SK-N-SH (cell line): ENCODE measurements at regions of chr22 and their contacts with region 1.

Region 1: DNA sequence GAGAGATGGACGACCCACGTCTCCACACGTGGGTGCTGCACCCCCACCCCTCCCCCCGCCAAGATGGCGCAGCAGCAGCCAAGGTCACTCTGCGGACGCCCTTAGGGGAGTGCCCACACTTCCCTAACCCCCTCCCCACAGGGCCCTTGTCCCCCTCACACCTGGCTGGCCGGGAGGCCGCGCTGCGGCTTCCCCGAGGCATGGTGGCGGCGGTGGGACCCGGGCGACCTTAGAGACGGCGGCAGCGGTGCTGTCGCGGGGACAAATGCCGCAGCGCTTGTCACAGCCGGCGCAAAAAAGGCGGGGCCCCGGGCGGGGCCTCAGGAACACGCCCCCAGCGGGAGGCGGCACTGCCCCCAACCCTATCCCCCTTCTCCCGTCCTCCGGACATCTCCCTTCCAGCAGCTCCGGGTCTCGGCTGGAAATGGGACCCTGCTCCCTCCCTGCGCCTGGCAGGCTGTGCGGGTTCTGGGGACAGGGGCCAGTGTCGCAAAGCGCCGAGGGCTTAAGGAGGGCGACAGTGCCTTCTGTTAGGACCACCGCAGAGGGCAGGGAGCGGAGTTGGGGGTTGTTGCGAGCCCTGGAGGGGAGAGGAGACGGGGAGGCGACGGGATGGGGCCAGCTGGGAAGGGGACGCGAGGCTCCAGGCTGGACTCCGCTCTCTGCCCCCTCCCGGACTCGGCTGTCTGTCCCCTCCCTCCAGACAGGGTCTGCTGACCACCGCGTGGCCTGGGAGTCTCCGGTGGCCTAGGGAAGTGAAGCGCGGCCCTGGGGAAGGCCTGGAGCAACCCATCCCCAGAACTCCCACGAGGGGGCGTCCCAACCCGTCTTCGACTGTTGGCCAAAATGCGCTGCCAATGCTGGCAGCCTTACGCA is at the start of gene CHCHD10:
- DNase-seq: peak; percentile 96
- H3K4me3 ChIP-seq: peak within 1 kb of the TSS; percentile 69
- H3K27ac ChIP-seq: peak within 1 kb of the TSS; percentile 48 to 89; a peak in 3 of 4 replicates
- H3K4me1 ChIP-seq: peaks cover 9 to 16% of the 10 kb centered on the region in 2 experiments; a peak in 3 of 4 replicates
- H3K27me3 ChIP-seq: no peaks in the 10 kb centered on the region
- CTCF ChIP-seq: peak; percentile 79
- EP300 ChIP-seq: no peak
- RAD21 ChIP-seq: peak; percentile 70
- polyA plus RNA-seq, gene CHCHD10: 27.7 and 70.1 TPM in 2 replicates

Region 2: DNA sequence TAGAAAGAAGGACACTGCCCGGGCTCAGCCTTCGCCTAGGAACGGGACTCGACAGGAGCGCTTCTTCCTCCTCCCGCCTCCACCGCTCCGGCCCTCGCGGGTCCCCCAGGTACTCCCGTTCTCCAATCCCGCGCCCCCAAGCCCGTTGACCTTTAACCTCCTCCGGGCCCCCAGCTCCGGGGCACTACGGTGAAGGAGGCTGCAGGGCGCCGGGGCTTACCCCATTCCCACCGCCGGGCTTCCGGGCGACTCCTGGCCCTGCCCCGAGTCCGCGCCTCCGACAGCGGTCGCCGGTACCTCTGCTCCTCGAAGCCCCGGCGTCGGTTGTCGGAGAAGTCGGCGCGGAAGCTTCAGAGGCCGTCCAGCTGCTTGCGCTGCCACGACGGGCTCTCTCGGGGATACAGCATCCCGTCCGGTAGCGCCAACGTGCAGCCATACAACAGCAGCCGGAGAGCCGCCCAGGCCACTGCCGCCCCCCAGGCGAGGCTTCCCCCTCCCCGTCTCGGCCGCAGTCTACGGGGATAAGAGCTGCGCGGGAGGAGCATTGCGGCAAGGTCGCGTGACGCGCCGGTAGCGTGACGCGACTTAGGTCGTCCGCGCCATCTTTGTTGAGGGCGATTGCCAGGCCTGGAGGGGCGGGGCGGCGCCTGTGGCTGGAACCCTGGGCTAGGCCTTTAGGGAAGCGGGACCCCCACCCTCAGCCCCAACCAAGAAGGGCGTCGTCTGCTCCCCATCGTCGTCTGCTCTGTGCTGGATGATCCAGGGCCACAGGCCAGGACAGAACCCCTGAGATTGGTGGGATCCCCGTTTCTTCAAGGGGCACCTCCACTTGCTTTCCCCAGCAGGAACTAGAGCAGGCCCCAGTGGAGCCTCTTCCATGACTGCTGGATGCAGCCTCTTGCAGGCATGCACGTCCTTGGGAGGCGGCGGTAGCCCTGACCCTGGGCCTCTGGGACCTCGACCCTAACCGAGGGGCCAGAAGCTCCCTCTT is 50.8 kb before region 1 on chr22:
- CTCF ChIA-PET with region 1: interaction called, 11 read pairs
- POLR2A ChIA-PET with region 1: no interaction called
- DNase-seq: peak; percentile 96
- H3K4me3 ChIP-seq: peak overlapping the region; percentile 65 to 84
- H3K27ac ChIP-seq: peak overlapping the region; percentile 45 to 46; a peak in 2 of 4 replicates
- H3K4me1 ChIP-seq: peaks cover 0 to 6% of the 10 kb centered on the region in 2 experiments; a peak in 1 of 4 replicates
- H3K27me3 ChIP-seq: no peaks in the 10 kb centered on the region
- CTCF ChIP-seq: no peak
- EP300 ChIP-seq: no peak
- RAD21 ChIP-seq: no peak

Region 3: DNA sequence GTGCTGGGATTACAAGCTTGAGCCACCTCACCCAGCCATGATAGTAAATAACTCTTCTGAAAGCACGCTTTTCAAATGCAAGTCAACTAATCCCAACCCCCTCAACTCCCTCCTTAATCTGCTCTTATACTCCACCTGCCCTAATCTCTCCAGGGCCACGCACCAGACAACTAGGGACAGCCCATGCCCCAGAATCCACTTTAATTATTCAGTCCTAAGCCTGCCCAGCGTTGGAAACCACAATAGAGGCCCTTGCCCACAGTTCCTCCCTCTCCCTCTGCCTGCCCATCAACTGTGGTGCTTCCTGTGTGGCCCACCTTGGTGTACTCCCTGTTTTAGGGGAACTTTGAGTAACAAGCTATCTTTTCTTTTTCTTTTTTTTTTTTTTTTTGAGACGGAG is 11.0 kb before region 1 on chr22:
- CTCF ChIA-PET with region 1: interaction called, 24 read pairs
- POLR2A ChIA-PET with region 1: no interaction called
- DNase-seq: no peak
- H3K4me3 ChIP-seq: no peak overlapping the region
- H3K27ac ChIP-seq: no peak overlapping the region
- H3K4me1 ChIP-seq: no peaks in the 10 kb centered on the region
- H3K27me3 ChIP-seq: no peaks in the 10 kb centered on the region
- CTCF ChIP-seq: no peak
- EP300 ChIP-seq: no peak
- RAD21 ChIP-seq: no peak

Region 4: GRCh38 chr22:23786752-23787599 is 19.1 kb after region 1 on chr22 and contains the start of gene SMARCB1:
- CTCF ChIA-PET with region 1: interaction called, 20 read pairs
- POLR2A ChIA-PET with region 1: interaction called, 4 read pairs
- DNase-seq: peak; percentile 98
- H3K4me3 ChIP-seq: peak within 1 kb of the TSS; percentile 84 to 92
- H3K27ac ChIP-seq: peak within 1 kb of the TSS; percentile 97 to 98
- H3K4me1 ChIP-seq: peaks cover 0 to 43% of the 10 kb centered on the region in 2 experiments; a peak in 2 of 4 replicates
- H3K27me3 ChIP-seq: no peaks in the 10 kb centered on the region
- CTCF ChIP-seq: no peak
- EP300 ChIP-seq: no peak; a peak in 1 of 4 replicates
- RAD21 ChIP-seq: no peak
- polyA plus RNA-seq, gene SMARCB1: 182 and 215 TPM in 2 replicates

Region 5: DNA sequence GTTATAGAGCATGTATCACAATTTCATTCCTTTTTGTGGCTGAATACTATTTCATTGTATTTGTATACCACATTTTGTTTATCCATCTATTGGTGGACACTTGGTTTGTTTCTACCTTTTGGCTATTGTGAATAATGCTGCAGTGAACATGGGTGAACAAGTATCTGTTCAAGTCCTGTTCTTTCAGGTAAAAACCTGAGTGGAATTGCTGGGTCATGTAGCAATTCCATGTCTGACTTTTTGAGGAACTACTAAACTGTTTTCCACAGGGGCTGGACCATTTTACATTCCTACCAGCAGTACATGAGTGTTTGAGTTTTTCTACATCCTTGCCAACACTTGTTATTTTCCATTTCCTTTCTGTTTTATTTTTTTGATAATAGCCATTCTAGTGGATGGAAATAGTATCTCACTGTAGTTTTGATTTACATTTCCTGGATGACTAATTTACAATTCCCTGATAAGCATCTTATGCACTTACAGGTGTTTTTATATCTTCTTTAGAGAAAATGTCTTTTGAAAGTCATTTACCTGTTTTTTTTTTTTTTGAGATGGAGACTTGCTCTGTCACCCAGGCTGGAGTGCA is 255.4 kb after region 1 on chr22:
- CTCF ChIA-PET with region 1: no interaction called
- POLR2A ChIA-PET with region 1: no interaction called
- DNase-seq: no peak
- H3K4me3 ChIP-seq: no peak overlapping the region
- H3K27ac ChIP-seq: no peak overlapping the region
- H3K4me1 ChIP-seq: peaks cover 0 to 12% of the 10 kb centered on the region in 2 experiments; a peak in 2 of 4 replicates
- H3K27me3 ChIP-seq: no peaks in the 10 kb centered on the region
- CTCF ChIP-seq: no peak
- EP300 ChIP-seq: no peak
- RAD21 ChIP-seq: no peak